Pancreas (tissue), 10 donors: ENCODE measurements at regions of chr19 and their contacts with region 1.

Region 1: GRCh38 chr19:4851551-4852290 is 15.7 kb downstream of the PLIN3 start:
- DNase-seq: peak; percentile 47 to 88 (median 66)
- ATAC-seq: peak; percentile 63 to 94 (median 84)
- H3K4me3 ChIP-seq: no peak overlapping the region
- H3K27ac ChIP-seq: no peak overlapping the region
- H3K4me1 ChIP-seq: no peaks in the 10 kb centered on the region
- H3K27me3 ChIP-seq: no peaks in the 10 kb centered on the region
- CTCF ChIP-seq: peak; percentile 43 to 77 (median 76)

Region 2: DNA sequence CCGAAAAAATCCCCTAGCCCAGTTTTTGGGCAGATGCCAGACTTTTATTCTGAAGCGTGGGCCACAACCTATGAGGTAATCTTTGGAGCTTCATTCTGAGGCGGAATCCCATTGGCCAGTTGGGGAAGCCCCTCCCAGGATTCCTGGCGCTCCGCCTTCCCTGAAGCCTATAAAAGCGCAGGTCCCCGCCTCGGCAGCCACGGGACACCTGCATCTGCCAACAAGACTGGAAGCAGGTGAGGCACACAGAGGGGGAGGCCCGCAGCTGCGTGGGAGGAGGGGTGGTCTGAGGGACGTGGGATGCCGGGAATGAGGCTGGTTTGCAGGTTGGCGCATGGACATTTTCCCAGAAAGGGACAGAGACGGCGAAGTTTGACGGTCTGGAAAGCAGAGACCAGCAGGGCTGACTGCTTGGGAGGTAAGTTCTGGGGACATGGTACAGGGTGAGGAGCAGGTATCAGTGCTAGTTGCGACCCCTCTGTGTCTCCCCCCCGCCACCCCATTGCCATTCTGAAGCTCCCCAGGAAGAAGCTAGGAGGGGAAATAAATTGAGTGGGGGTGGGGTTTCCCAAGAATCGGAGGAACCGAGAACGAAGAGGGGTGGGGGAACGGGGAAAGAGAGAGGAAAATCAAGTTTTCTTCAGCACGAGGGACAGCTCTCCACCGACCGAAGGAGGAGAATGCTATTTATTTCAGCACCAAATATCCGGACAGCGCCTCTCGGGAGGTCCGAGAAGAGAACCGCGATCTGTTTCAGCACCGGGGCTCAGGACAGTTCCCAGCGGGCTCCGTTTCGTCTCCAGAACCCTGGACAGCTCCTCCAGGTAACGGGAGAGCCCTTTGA is 82.6 kb before region 1 on chr19:
- intact Hi-C with region 1: no loop called
- DNase-seq: peak; percentile 71 to 89 (median 86)
- ATAC-seq: peak; percentile 82 to 99 (median 87)
- H3K4me3 ChIP-seq: peak overlapping the region in 1 of 4 donors; percentile 13
- H3K27ac ChIP-seq: no peak overlapping the region
- H3K4me1 ChIP-seq: no peaks in the 10 kb centered on the region
- H3K27me3 ChIP-seq: no peaks in the 10 kb centered on the region
- CTCF ChIP-seq: no peak

Region 3: DNA sequence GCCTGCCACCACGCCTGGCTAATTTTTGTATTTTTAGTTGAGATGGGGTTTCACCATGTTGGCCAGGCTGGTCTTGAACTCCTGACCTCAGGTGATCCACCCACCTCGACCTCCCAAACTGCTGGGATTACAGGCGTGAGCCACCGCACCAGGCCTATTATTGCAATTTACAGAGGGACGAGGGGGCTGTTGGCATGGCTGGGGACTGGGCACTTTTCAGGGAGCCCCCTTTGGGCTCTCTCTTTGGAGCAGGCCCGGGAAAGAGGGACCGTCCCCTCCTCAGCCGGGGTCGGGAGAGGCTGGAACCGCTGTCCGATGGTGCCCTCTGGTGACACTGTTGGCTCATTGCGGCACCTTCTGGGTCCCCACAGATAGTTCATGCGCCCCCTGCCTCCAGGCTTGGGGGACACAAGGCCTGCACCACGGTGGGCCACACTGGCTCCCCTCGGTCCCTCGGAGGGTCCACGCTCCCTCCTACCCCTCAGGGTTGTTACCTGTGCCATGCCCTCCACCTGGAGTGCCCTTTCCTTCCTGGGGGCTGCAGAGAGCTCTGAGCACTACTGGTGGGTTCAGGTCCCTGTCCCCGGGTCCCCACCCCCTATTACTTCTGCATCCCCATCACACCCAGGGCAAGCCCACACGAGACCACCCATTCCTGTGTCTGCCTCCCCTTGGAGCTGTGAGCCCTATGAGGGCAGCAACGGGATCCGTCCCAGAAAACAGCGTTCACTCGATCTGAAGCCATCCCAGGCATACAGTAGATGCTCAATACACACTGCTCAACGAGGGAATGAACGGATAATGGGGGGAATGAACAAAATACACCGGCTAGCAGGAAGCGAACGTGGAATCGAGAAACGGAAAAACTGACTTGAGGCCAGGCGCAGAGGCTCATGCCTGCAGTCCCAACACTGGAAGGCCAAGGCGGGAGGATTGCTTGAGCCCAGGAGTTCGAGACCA is 47.7 kb before region 1 on chr19:
- intact Hi-C with region 1: loop called in 1 of 3 experiments (anchors 10 kb)
- DNase-seq: peak in 4 of 6 donors; percentile 58 to 80 (median 69)
- ATAC-seq: peak in 3 of 4 donors; percentile 65 to 76 (median 72)
- H3K4me3 ChIP-seq: no peak overlapping the region
- H3K27ac ChIP-seq: no peak overlapping the region
- H3K4me1 ChIP-seq: no peaks in the 10 kb centered on the region
- H3K27me3 ChIP-seq: no peaks in the 10 kb centered on the region
- CTCF ChIP-seq: peak; percentile 30 to 59 (median 58)

Region 4: GRCh38 chr19:4815426-4816201 is 36.1 kb before region 1 on chr19:
- intact Hi-C with region 1: loop called in 1 of 3 experiments (anchors 5 kb)
- DNase-seq: peak; percentile 80 to 92 (median 86)
- ATAC-seq: peak; percentile 89 to 96 (median 93)
- H3K4me3 ChIP-seq: peak overlapping the region in 2 of 4 donors; percentile 5 to 27
- H3K27ac ChIP-seq: no peak overlapping the region
- H3K4me1 ChIP-seq: peaks cover 0 to 9% (median 0%) of the 10 kb centered on the region in 3 donors
- H3K27me3 ChIP-seq: no peaks in the 10 kb centered on the region
- CTCF ChIP-seq: no peak